Naive thymus-derived CD4-positive, alpha-beta T cell (primary cell): ENCODE measurements at regions of chr1 and their contacts with region 1.

Region 1: GRCh38 chr1:26321315-26322041 is 3.7 kb downstream of the CD52 start:
- DNase-seq: peak; percentile 85 to 98 (median 92)
- ATAC-seq: peak; percentile 93
- H3K4me3 ChIP-seq: peak overlapping the region; percentile 98
- H3K4me3 Mint-ChIP-seq: peak overlapping the region; percentile 79 to 99 (median 94)
- H3K27ac ChIP-seq: peak overlapping the region; percentile 77
- H3K27ac Mint-ChIP-seq: peak overlapping the region; percentile 87 to 99 (median 96)
- H3K4me1 ChIP-seq: peaks cover 42 to 45% of the 10 kb centered on the region in 2 donors
- H3K4me1 Mint-ChIP-seq: peaks cover 40 to 70% (median 48%) of the 10 kb centered on the region in 7 donors
- H3K27me3 ChIP-seq: no peaks in the 10 kb centered on the region
- H3K27me3 Mint-ChIP-seq: no peaks in the 10 kb centered on the region

Region 2: GRCh38 chr1:26111530-26112406 is 209.7 kb before region 1 on chr1 and contains the start of gene PDIK1L:
- CTCF ChIA-PET with region 1: no interaction called
- POLR2A ChIA-PET with region 1: no interaction called
- intact Hi-C with region 1: loop called in 1 of 2 experiments (anchors 5 kb)
- DNase-seq: peak; percentile 91 to 95 (median 94)
- ATAC-seq: peak; percentile 93
- H3K4me3 ChIP-seq: peak within 1 kb of the TSS; percentile 93
- H3K4me3 Mint-ChIP-seq: peak within 1 kb of the TSS; percentile 86 to 99 (median 93)
- H3K27ac ChIP-seq: peak within 1 kb of the TSS; percentile 84
- H3K27ac Mint-ChIP-seq: peak within 1 kb of the TSS; percentile 84 to 98 (median 92)
- H3K4me1 ChIP-seq: peaks cover 12 to 19% of the 10 kb centered on the region in 2 donors
- H3K4me1 Mint-ChIP-seq: peaks cover 6 to 44% (median 34%) of the 10 kb centered on the region in 7 donors
- H3K27me3 ChIP-seq: no peaks in the 10 kb centered on the region
- H3K27me3 Mint-ChIP-seq: no peaks in the 10 kb centered on the region
- total RNA-seq, gene PDIK1L: 9.1 to 29.6 (median 20.3) TPM

Region 3: GRCh38 chr1:26284597-26285360 is 36.7 kb before region 1 on chr1:
- CTCF ChIA-PET with region 1: interaction called, 541 read pairs
- POLR2A ChIA-PET with region 1: interaction called, 1,967 read pairs
- intact Hi-C with region 1: loop called (anchors 1 kb)
- DNase-seq: peak; percentile 60 to 97 (median 87)
- ATAC-seq: peak; percentile 81
- H3K4me3 ChIP-seq: peak overlapping the region; percentile 18
- H3K4me3 Mint-ChIP-seq: peak overlapping the region; percentile 44 to 88 (median 76)
- H3K27ac ChIP-seq: peak overlapping the region; percentile 86
- H3K27ac Mint-ChIP-seq: peak overlapping the region; percentile 90 to 99 (median 97)
- H3K4me1 ChIP-seq: peaks cover 89 to 91% of the 10 kb centered on the region in 2 donors
- H3K4me1 Mint-ChIP-seq: peaks cover 62 to 94% (median 86%) of the 10 kb centered on the region in 7 donors
- H3K27me3 ChIP-seq: no peaks in the 10 kb centered on the region
- H3K27me3 Mint-ChIP-seq: no peaks in the 10 kb centered on the region

Region 4: GRCh38 chr1:26336477-26337205 is 15.2 kb after region 1 on chr1:
- CTCF ChIA-PET with region 1: no interaction called
- POLR2A ChIA-PET with region 1: interaction called, 7 read pairs
- intact Hi-C with region 1: loop called in 1 of 2 experiments (anchors 2 kb)
- DNase-seq: peak; percentile 55 to 79 (median 74)
- ATAC-seq: peak; percentile 96
- H3K4me3 ChIP-seq: peak overlapping the region; percentile 65
- H3K4me3 Mint-ChIP-seq: peak overlapping the region; percentile 86 to 92 (median 89)
- H3K27ac ChIP-seq: peak overlapping the region; percentile 58
- H3K27ac Mint-ChIP-seq: peak overlapping the region in 2 of 9 donors; percentile 9 to 68
- H3K4me1 ChIP-seq: peaks cover 5 to 7% of the 10 kb centered on the region in 2 donors
- H3K4me1 Mint-ChIP-seq: peaks cover 0 to 13% (median 10%) of the 10 kb centered on the region in 7 donors
- H3K27me3 ChIP-seq: no peaks in the 10 kb centered on the region
- H3K27me3 Mint-ChIP-seq: peaks cover 0 to 23% (median 0%) of the 10 kb centered on the region in 5 donors

Region 5: DNA sequence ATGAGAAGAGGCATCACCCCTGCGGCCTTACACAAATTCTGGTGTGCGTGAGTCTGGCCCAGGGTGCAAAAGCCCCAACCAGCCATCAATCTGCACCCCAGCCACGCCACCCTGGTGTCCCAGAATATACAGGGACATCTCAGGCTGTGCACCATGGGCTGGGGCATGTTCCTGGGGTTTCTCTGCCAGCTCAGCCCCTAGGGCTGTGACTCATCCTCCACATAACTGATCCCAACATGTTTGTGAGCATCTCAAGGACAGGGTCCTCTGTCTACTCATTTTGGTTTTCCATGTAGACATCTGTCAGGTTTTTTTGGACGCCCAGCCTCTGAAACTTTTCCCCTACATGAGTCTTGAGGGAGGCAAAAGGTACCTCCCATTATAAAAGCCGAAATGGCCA is 50.6 kb after region 1 on chr1:
- CTCF ChIA-PET with region 1: interaction called, 11 read pairs
- POLR2A ChIA-PET with region 1: interaction called, 24 read pairs
- intact Hi-C with region 1: loop called in 1 of 2 experiments (anchors 5 kb)
- DNase-seq: no peak
- ATAC-seq: no peak
- H3K4me3 ChIP-seq: no peak overlapping the region
- H3K4me3 Mint-ChIP-seq: peak overlapping the region in 9 of 10 donors; percentile 15 to 75 (median 56)
- H3K27ac ChIP-seq: no peak overlapping the region
- H3K27ac Mint-ChIP-seq: peak overlapping the region; percentile 42 to 93 (median 74)
- H3K4me1 ChIP-seq: peaks cover 66 to 73% of the 10 kb centered on the region in 2 donors
- H3K4me1 Mint-ChIP-seq: peaks cover 62 to 79% (median 73%) of the 10 kb centered on the region in 7 donors
- H3K27me3 ChIP-seq: no peaks in the 10 kb centered on the region
- H3K27me3 Mint-ChIP-seq: peaks cover 0 to 7% (median 0%) of the 10 kb centered on the region in 5 donors

Region 6: DNA sequence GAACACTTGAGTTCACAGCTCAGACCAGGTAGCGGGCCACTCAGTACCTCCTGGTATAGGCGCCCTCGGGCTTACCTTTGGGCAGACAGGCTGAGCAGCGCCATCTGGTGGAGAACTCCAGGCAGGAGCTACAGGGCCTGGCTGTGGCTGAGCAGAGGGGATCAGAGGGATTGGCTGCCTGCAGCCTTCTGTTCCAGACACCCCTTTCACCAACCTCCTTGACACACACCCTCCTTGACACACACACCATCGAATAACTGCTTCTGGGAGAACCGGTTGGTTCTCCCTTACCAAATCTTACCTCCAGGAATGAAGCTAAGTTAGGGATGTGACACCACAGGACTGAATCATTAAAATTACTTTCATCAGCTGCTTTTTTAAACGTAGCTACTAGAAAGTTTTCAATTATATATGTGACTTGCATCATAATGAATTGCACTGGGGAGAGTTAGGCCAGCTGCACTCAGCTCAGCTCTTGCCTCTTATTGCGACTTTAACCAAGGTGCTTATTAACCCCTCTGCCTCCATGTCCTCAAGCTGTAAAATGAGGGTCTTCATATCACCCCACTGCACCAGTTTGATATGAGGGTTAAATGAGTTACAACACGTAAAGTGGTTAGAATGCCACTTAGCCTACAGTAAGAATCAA is 95.8 kb after region 1 on chr1:
- CTCF ChIA-PET with region 1: interaction called, 5 read pairs
- POLR2A ChIA-PET with region 1: interaction called, 4 read pairs
- intact Hi-C with region 1: loop called in 1 of 2 experiments (anchors 1 kb)
- DNase-seq: peak; percentile 57 to 81 (median 76)
- ATAC-seq: peak; percentile 99
- H3K4me3 ChIP-seq: no peak overlapping the region
- H3K4me3 Mint-ChIP-seq: no peak overlapping the region
- H3K27ac ChIP-seq: no peak overlapping the region
- H3K27ac Mint-ChIP-seq: no peak overlapping the region
- H3K4me1 ChIP-seq: no peaks in the 10 kb centered on the region
- H3K4me1 Mint-ChIP-seq: peaks cover 0 to 3% (median 0%) of the 10 kb centered on the region in 7 donors
- H3K27me3 ChIP-seq: peaks cover 0 to 3% of the 10 kb centered on the region in 2 donors
- H3K27me3 Mint-ChIP-seq: peaks cover 17 to 65% (median 19%) of the 10 kb centered on the region in 5 donors